A673 (cell line): ENCODE measurements at regions of chr12 and their contacts with region 1.

Region 1: DNA sequence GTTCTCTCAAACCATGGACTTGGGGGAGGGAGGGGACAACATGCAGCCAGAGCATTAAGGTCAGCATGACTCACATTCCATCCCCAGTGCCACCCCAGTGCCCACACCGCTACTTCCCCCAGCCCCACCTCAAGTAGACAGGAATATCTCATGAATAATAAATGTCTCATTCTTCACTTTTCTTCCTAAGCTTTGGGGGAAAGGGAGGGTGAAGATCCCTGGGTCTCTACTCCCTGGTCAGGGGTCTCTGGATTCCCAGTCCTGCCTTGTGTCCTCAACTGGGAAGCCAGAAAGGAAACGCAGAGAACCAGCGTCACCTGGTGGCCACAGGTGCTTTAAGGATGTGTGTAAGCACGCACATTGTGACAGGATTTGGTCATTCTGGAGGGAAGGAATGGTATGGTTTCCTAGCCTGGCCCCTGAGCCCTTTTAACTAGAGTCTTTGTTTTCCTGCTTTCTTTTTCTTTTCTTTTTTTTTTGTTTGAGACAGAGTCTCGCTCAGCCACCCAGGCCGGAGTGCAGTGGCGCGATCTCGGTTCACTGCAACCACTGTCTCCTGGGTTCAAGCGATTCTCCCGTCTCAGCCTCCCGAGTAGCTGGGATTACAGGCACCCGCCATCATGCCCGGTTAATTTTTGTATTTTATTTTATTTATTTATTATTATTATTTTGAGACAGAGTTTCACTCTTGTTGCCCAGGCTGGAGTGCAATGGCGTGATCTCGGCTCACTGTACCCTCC is 3.4 kb downstream of the GPR84 start:
- DNase-seq: peak; percentile 90
- H3K4me3 ChIP-seq: no peak overlapping the region
- H3K27ac ChIP-seq: peak overlapping the region; percentile 74
- H3K4me1 ChIP-seq: peaks cover 40% of the 10 kb centered on the region
- H3K27me3 ChIP-seq: no peaks in the 10 kb centered on the region
- CTCF ChIP-seq: peak; percentile 91

Region 2: GRCh38 chr12:54220092-54220557 is 140.8 kb before region 1 on chr12:
- CTCF ChIA-PET with region 1: interaction called, 4 read pairs
- POLR2A ChIA-PET with region 1: no interaction called
- intact Hi-C with region 1: loop called (anchors 1 kb)
- DNase-seq: peak; percentile 88
- H3K4me3 ChIP-seq: no peak overlapping the region
- H3K27ac ChIP-seq: no peak overlapping the region
- H3K4me1 ChIP-seq: peaks cover 19% of the 10 kb centered on the region
- H3K27me3 ChIP-seq: no peaks in the 10 kb centered on the region
- CTCF ChIP-seq: peak; percentile 80

Region 3: DNA sequence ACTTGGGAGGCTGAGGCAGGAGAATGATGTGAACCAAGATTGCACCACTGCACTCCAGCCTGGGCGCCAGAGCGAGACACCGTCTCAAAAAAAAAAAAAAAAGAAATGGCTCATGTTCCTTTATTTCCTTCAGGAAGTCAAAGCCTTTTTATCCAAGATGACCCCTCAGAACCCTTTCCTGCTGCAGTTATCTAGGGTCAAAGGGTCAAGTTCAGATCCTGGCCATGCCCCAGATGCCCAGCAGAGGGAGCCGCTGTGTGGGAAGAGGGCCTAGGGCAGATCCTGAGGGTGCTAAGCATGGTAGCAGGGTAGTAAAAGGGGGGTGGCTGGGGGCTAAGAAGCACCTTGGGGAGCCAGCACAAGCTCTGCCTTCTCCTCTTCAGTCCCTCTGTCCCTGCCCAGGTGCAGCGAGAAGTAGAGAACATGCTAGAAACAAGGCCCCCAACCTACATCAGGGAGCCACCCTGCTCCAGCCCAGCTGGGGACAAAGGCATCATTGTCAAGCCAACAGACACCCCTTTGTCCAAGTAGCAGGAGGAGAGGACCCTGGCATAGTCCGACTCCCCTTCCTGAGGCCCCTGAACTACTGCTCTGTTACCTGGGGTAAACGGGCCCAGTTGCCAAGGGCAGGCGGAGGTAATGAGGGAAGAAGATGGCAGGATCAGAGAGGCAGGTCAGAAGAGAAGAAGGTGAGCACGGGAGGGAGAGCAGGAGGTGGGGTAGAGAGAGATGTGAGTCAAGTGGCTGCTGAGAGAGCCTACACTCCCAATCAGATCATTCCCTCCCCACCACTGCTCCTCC is 66.5 kb before region 1 on chr12:
- CTCF ChIA-PET with region 1: no interaction called
- POLR2A ChIA-PET with region 1: no interaction called
- intact Hi-C with region 1: loop called (anchors 2 kb)
- DNase-seq: no peak
- H3K4me3 ChIP-seq: no peak overlapping the region
- H3K27ac ChIP-seq: no peak overlapping the region
- H3K4me1 ChIP-seq: no peaks in the 10 kb centered on the region
- H3K27me3 ChIP-seq: peaks cover under 1% of the 10 kb centered on the region
- CTCF ChIP-seq: peak; percentile 85